ENCODE measurements at regions of chr1 and their contacts with region 1.

Region 1: DNA sequence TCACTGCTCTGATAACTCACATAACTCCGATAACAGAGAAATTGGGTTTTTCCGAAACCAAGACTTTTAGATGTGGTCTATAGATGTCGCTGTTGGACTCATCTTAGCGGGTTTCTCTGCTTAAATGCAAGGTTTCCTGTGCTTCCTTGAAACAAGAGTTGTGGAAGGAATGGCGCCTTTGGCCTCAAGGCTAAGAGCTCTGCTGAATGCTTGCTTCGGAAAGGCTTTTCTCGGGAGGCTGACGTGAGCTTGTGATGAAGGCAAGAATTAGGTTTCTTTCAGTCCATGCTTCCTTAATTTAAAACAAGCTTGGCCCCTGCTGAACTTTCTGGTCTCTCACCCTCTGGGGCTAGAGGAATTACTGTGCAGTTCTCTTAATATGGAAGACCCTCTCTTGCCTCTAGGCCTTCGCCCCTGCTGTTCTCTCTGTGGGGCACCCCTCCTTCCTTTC is 113.5 kb downstream of the MAP3K21 start:
- DNase-seq: no peak
- ATAC-seq: peak; percentile 83 to 96 (median 91)
- H3K4me3 ChIP-seq: no peak overlapping the region
- H3K27ac ChIP-seq: no peak overlapping the region
- H3K4me1 ChIP-seq: peaks cover 0 to 6% (median 0%) of the 10 kb centered on the region in 4 donors
- H3K27me3 ChIP-seq: no peaks in the 10 kb centered on the region
- CTCF ChIP-seq: peak; percentile 60 to 70 (median 67)
- POLR2A ChIP-seq: no peak

Region 2: DNA sequence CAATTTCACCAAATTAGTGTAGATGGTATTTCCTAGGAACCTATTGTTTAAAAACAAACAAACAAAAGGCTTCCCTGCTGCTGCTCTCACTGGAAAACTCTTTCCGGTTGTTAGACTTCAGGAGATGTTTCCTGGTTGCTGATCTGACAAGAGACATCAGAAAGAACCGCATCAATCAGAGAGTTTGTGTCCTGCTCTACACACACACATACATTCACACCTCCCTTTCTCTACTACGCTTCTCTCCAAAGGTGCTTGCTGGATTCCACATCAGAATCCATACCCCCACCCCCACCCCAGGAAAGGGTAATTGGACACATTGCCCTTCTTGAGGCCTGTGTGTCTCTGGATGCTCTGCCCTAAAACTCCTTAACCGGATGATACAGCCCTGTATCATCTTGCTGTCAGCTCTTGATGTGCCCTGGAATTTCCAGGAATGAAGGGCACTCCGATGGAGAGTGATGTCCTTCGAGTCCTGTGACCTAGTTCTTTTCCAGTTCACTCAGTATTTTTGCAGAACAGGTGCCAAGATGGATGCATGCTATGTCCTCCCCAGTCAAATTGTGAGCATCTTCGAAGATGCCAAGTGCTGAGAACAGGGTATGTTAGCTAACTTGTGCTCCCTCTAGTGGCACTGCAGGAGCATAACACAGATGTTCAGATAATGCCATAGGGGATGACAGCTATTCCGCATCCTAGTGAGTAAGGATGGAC is 349.8 kb after region 1 on chr1:
- intact Hi-C with region 1: loop called in 1 of 2 experiments (anchors 5 kb)
- DNase-seq: peak in 1 of 3 donors; percentile 45
- ATAC-seq: peak; percentile 94 to 99 (median 98)
- H3K4me3 ChIP-seq: no peak overlapping the region
- H3K27ac ChIP-seq: no peak overlapping the region
- H3K4me1 ChIP-seq: no peaks in the 10 kb centered on the region
- H3K27me3 ChIP-seq: no peaks in the 10 kb centered on the region
- CTCF ChIP-seq: peak; percentile 87 to 96 (median 88)
- POLR2A ChIP-seq: no peak

Measured in right lobe of liver (tissue), 6 donors.